Ascending aorta (tissue), 2 donors: ENCODE measurements at regions of chr20 and their contacts with region 1.

Region 1: GRCh38 chr20:22795871-22796270 is 211.5 kb upstream of the FOXA2 start:
- DNase-seq: peak in 1 of 2 donors; percentile 87
- H3K4me3 ChIP-seq: no peak overlapping the region
- H3K27ac ChIP-seq: peak overlapping the region; percentile 52 to 78
- H3K4me1 ChIP-seq: peaks cover 4 to 27% of the 10 kb centered on the region in 2 donors
- H3K27me3 ChIP-seq: no peaks in the 10 kb centered on the region
- CTCF ChIP-seq: no peak

Region 2: DNA sequence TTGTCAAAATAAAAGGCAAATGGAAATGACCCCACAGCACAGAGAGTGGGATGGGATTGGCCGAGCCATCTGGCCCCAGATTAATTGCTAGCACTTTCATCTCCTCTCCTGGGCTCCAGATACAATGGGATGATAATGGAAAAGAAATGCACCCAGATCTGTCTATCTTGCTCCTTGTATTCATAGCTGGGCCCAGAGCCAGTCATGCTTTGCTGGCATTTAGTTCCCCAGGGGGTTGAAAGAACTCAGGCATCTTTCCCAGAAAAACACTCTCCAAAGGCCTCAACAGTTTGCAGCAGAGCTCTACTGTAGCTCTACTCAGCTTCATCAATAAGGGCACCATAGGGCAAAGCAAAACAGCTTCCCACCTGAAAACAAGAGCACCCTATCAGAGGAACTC is 95.5 kb before region 1 on chr20:
- intact Hi-C with region 1: loop called (anchors 5 kb)
- DNase-seq: peak in 1 of 2 donors; percentile 79
- H3K4me3 ChIP-seq: no peak overlapping the region
- H3K27ac ChIP-seq: no peak overlapping the region
- H3K4me1 ChIP-seq: peaks cover 3 to 14% of the 10 kb centered on the region in 2 donors
- H3K27me3 ChIP-seq: no peaks in the 10 kb centered on the region
- CTCF ChIP-seq: no peak

Region 3: GRCh38 chr20:22723648-22724047 is 72.2 kb before region 1 on chr20:
- intact Hi-C with region 1: loop called (anchors 5 kb)
- DNase-seq: no peak
- H3K4me3 ChIP-seq: no peak overlapping the region
- H3K27ac ChIP-seq: no peak overlapping the region
- H3K4me1 ChIP-seq: no peaks in the 10 kb centered on the region
- H3K27me3 ChIP-seq: no peaks in the 10 kb centered on the region
- CTCF ChIP-seq: no peak

Region 4: DNA sequence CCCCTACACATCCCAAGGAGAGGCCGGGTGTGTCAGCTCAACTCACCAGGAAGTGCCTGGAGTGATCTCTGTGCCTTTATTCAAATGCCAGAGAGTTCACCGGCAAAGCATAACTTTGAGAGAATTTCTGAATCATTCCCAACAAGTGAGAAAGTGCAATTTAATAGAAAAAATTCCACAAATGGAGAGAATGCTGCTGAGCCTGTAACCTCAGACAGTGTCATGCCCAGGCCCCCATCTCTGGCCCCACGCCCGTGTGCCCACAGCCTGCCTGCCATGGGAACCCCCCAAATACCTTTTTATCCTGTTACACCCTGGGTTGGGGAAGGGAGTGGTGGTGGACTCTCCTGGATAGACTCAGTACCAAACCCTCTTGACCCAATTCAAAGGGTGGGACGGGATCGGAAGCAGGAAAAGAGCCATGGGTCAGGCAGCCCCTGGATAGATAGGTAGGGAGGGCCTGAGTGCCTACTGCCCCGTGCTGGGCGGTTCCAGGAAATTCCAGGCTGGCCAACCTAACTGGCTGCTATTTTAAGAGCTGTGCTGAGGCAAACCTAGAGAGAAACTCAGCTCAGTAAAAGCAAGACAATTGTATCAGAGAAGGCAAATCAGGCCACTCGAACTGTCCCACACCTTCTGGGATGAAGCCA is 32.5 kb before region 1 on chr20:
- intact Hi-C with region 1: loop called (anchors 2 kb)
- DNase-seq: peak in 1 of 2 donors; percentile 81
- H3K4me3 ChIP-seq: peak overlapping the region in 1 of 2 donors; percentile 39
- H3K27ac ChIP-seq: peak overlapping the region; percentile 87 to 94
- H3K4me1 ChIP-seq: peaks cover 5 to 36% of the 10 kb centered on the region in 2 donors
- H3K27me3 ChIP-seq: no peaks in the 10 kb centered on the region
- CTCF ChIP-seq: no peak

Region 5: DNA sequence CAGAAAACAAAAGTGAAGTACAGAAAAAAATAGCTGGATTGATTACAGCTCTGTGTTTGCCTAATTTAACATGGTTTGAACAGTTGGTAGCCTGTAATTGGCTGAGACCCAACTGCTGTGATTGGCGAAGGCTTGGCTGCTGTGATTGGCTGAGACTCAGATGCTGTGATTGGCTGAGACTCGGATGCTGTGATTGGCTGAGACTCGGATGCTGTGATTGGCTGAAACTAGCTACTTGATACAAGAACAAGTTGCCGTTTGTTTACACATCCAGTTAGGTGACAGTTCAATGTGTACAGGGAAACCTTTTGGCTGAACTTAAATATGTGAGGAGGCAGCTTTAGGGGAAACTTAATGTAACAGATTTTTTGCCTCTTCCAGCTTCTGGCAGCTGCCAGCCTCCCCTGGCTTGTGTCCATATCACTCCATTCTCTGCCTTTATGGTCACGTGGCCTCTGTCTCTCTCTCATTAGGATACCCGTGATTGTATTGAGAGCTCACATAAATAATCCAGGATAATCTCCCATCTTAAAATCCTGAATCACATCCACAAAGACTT is 11.9 kb after region 1 on chr20:
- intact Hi-C with region 1: no loop called
- DNase-seq: no peak
- H3K4me3 ChIP-seq: no peak overlapping the region
- H3K27ac ChIP-seq: no peak overlapping the region
- H3K4me1 ChIP-seq: peaks cover 0 to 6% of the 10 kb centered on the region in 2 donors
- H3K27me3 ChIP-seq: no peaks in the 10 kb centered on the region
- CTCF ChIP-seq: no peak

Region 6: DNA sequence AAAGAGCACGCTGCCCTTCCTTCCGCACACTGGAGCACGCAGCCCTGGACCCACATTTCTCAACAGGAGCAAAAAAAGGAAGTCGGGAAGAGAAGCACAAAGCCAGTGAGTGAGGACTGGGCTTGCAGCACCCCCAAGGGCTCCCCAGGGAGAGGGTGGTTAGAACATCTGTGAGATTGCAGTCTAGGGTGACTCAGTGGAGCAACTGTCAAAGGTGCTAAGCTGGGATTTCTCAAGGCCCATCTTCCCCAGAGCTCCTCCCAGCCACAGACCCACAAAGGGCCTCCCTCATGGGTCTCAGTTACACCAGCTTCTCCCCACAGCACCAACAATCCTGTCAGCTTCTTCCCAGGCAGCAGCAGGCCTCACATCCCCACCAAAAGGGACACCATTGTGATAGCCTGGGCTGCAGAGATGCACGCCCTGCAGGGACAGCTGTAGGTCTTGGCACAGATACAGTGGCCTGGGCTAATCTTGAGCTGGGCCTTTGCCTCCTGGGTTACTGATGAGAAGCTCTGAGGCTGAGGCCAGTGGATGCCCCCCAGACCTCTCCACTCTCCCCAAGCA is 329.8 kb after region 1 on chr20:
- intact Hi-C with region 1: no loop called
- DNase-seq: peak in 1 of 2 donors; percentile 76
- H3K4me3 ChIP-seq: no peak overlapping the region
- H3K27ac ChIP-seq: peak overlapping the region in 1 of 2 donors; percentile 44
- H3K4me1 ChIP-seq: no peaks in the 10 kb centered on the region
- H3K27me3 ChIP-seq: no peaks in the 10 kb centered on the region
- CTCF ChIP-seq: no peak

Region 7: DNA sequence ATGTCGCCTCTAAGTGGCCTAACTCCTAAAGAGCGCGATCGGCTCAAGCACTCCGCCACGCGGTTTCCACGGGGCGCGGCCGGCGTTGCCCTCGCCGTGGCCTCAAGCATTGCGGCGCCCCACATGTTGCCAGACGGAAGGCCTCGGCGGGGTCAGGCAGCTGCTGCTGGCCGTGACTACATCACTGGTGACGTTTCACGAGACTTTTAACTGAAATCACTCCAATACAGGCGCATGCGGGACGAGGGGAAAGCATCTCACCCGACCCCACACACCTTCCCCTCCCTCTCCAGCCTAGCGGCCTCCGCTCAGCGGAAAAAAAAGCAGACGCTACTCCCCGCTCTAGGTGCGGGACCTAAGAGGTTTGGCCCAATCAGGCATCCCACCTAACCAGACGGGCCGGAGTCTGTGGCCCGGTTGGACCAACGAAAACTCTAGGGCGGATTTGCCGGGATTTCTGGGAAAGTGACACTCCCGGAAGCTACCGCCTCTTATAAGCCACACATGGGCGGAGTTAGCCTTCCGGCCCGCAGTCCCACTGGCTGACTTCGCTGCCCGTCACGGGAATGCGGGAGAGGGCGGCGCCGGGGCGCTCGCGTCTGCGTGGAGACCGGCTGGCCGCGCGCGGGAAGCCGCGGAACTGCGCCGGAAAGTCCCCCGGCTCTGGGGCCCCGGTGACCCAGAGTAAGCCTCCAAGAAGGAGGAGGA is 554.5 kb after region 1 on chr20 and contains the start of gene NXT1:
- intact Hi-C with region 1: loop called (anchors 10 kb)
- DNase-seq: peak; percentile 93 to 99
- H3K4me3 ChIP-seq: peak within 1 kb of the TSS; percentile 93 to 97
- H3K27ac ChIP-seq: peak within 1 kb of the TSS; percentile 99 to 100
- H3K4me1 ChIP-seq: peaks cover 3 to 18% of the 10 kb centered on the region in 2 donors
- H3K27me3 ChIP-seq: no peaks in the 10 kb centered on the region
- CTCF ChIP-seq: peak in 1 of 3 experiments; percentile 0
- total RNA-seq, gene NXT1: 50.0 TPM